GM12878 (cell line): ENCODE measurements at regions of chr3 and their contacts with region 1.

Region 1: DNA sequence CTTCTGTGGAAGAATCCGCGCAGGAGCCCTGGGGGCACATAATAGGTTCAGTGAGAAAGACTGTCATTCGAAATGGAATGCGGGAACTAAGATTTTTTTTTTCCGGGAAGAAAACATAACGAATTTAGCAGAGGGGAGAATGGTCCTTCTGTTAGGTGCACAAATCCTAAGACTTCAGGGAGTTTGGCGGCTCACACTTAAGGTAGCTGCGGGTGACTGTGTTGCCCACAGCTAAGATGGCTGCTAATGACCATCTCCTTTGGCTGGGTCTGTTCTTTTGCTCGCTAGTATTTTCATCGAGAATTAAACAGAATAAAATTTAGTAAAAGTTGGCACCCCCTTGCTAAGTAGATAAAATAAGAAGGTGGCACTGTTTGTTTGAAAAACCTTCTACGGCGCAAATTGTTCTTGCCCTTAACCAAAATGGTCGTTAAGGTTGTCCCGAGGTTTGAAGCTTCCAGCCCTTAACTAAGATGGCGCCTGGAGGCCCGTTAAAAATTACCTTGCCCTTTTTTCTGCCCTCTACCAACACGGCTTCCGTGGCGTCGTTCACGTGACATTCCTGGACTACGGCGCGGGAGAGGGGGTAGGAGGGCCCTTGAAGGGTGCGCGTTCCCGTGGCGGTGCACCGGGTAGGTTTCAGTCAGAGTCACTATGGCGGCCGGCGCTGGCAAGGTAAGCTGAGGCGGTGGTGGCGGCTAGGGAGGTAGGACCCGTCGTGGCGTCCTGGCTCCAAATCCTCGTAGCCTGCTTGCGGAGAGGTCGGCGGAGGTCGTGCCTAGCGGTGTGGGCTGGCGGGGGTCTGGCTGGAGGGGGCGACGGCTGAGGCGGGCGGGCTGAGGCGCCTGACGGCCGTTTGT is at the start of gene SLMAP:
- DNase-seq: peak; percentile 90
- ATAC-seq: peak; percentile 95
- H3K4me3 ChIP-seq: peak within 1 kb of the TSS; percentile 77
- H3K27ac ChIP-seq: peak within 1 kb of the TSS; percentile 91
- H3K4me1 ChIP-seq: peaks cover 6% of the 10 kb centered on the region; the same call in 1 of the 2 replicates
- H3K27me3 ChIP-seq: no peaks in the 10 kb centered on the region
- CTCF ChIP-seq: no peak
- EP300 ChIP-seq: 0 out of 4 replicates have a peak, but pooled peaks of 1 of the 2 experiments have one; percentile 30
- POLR2A ChIP-seq: peak; percentile 98
- RAD21 ChIP-seq: no peak
- polyA plus RNA-seq, gene SLMAP: 8.3 to 10.4 TPM

Region 2: GRCh38 chr3:57597122-57597923 is 158.6 kb before region 1 on chr3 and contains the start of gene ARF4:
- CTCF ChIA-PET with region 1: interaction called, 3 read pairs
- POLR2A ChIA-PET with region 1: interaction called, 10 read pairs
- RAD21 ChIA-PET with region 1: interaction called, 5 read pairs
- SMC1A ChIA-PET with region 1: interaction called, 7 read pairs
- in situ Hi-C with region 1: no loop called
- intact Hi-C with region 1: loop called (anchors 5 kb)
- DNase-seq: peak; percentile 99
- ATAC-seq: peak; percentile 92
- H3K4me3 ChIP-seq: peak within 1 kb of the TSS; percentile 91
- H3K27ac ChIP-seq: peak within 1 kb of the TSS; percentile 95
- H3K4me1 ChIP-seq: no peaks in the 10 kb centered on the region; the same call in 1 of the 2 replicates
- H3K27me3 ChIP-seq: no peaks in the 10 kb centered on the region
- CTCF ChIP-seq: peak in 2 of 3 experiments; percentile 7 to 20; a peak in 1 of 6 replicates
- EP300 ChIP-seq: peak in 1 of 2 experiments; percentile 63; a peak in 2 of 4 replicates
- POLR2A ChIP-seq: peak; percentile 83
- RAD21 ChIP-seq: no peak
- polyA plus RNA-seq, gene ARF4: 166 to 283 TPM

Region 3: DNA sequence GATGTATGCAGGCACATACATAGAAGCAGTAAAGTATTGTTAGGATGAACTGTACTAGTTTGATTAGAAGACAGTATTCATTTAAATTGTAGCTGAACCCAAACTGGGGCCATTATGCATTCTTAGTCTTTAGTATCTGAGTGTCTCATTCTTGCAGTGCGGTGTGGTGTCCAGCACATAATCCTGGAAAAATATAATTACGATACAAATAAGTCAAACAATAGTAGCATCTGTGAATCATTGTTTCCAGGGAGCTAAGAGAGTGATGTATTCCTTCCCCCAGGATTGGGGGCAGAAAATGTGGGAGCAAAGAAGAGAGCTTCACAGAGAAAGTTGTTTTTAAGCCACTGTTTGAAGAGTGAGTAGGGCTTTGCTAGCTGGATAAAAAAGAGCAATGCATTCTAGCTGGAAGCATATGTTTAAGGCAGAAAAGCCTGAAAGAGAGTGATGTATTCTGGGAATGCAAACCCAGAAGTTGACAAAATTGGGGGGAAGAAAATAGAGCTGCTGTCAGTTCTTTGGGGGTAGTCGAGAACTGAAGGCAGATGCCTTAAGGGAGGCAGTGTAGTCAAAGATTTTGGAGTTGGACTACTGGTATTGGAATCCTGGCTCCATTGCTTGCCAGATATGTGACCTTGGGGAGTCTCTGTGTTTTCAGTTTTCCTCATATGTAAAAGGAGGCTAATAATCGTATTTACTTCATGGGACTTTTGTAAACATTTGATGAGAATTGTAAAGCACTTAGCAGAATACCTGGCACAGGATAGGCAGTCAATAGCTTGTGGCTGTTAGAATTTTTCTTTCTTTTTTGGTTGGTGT is 14.3 kb after region 1 on chr3:
- CTCF ChIA-PET with region 1: interaction called, 5 read pairs
- POLR2A ChIA-PET with region 1: interaction called, 8 read pairs
- RAD21 ChIA-PET with region 1: interaction called, 18 read pairs
- SMC1A ChIA-PET with region 1: interaction called, 27 read pairs
- in situ Hi-C with region 1: no loop called
- intact Hi-C with region 1: no loop called
- DNase-seq: no peak
- ATAC-seq: no peak
- H3K4me3 ChIP-seq: no peak overlapping the region
- H3K27ac ChIP-seq: no peak overlapping the region
- H3K4me1 ChIP-seq: no peaks in the 10 kb centered on the region
- H3K27me3 ChIP-seq: no peaks in the 10 kb centered on the region
- CTCF ChIP-seq: no peak
- EP300 ChIP-seq: no peak
- POLR2A ChIP-seq: no peak
- RAD21 ChIP-seq: no peak

Region 4: GRCh38 chr3:57796261-57796660 is 40.4 kb after region 1 on chr3:
- CTCF ChIA-PET with region 1: interaction called, 7 read pairs
- POLR2A ChIA-PET with region 1: no interaction called
- RAD21 ChIA-PET with region 1: interaction called, 7 read pairs
- SMC1A ChIA-PET with region 1: interaction called, 13 read pairs
- in situ Hi-C with region 1: no loop called
- intact Hi-C with region 1: no loop called
- DNase-seq: no peak
- ATAC-seq: no peak
- H3K4me3 ChIP-seq: no peak overlapping the region
- H3K27ac ChIP-seq: no peak overlapping the region
- H3K4me1 ChIP-seq: peaks cover 12% of the 10 kb centered on the region
- H3K27me3 ChIP-seq: no peaks in the 10 kb centered on the region
- CTCF ChIP-seq: no peak
- EP300 ChIP-seq: no peak
- POLR2A ChIP-seq: no peak
- RAD21 ChIP-seq: no peak